G401 (cell line): ENCODE measurements at regions of chr14 and their contacts with region 1.

Region 1: GRCh38 chr14:99508896-99509629 is 27.9 kb downstream of the CCNK start:
- DNase-seq: peak; percentile 64

Region 2: DNA sequence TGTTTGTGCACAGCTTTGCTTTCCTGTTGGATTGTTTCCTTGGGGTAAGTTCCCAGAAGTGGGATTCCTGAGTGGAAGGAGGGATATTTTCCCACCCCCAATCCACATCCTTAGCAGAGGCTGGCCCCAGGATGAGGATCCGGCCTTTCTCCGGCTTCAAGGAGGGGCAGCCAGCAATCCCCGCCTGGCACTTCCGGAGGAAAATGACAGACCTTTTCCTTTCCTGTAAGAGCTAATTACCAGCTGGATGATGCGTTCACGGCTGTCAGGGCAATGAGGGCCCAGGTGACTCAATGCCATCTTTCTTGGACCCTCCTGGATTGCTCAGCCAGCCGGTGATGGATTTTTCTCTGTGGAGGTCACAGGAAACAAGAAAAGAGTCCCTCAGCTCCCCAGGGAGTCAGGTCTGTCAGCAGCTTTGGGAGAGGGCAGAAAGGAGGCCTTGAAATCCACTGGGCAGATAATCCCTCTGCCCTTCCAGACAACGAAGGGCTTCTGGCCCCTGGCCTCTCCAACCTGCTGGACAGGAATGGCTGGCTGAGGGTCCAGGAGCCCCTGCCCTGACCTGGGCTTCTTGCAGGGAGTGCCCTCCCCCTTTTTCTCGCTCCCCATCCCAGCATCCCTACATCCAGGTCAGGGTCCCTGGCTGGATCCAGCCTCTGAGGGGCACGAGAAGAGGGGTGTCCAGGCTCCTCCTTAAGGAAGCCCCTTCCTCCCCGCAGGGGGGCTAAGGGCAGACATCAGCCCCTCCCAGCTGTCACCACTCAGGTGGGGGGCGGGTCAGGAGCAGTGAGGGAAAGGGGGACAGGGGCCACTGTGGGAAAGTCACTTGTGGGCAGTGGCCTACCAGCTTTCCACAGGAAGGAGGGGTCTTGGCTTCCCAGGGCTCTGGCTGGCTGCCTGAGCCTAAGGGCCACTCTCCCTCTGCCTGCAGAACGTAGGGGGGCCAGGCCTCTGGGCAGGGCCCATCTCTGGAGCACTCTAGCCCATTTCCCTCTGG is 111.1 kb after region 1 on chr14:
- in situ Hi-C with region 1: loop called (anchors 10 kb)
- DNase-seq: peak; percentile 37